Prostate gland (tissue), 2 donors: ENCODE measurements at regions of chr13 and their contacts with region 1.

Region 1: DNA sequence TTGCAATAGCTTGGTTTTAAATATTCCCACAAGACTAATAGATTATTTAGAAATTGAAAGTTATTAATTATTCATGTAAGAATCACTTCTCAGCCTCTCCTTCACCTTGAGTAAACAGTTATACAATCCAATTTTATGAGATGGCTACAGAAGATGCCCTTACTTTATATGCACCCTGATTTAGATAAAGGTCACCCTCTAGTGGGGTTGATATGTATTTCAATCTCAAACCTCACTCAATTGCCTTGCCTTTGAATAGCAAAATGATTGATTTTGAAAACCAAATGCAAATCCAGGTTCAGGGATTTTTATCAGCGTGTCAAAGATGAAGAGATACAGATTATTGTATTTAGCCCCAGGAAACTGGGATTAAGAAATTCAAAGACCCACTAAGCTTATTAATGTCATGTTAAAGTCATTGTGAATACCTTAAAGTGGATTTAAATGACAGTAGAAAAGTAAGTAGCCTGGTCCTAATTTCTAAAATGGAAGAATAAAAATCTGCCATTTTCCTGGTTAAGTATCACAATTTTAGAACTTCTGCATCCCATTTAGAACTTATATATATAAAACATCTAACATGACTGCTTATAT is 305.1 kb downstream of the ITGBL1 start:
- DNase-seq: no peak
- H3K4me3 ChIP-seq: no peak overlapping the region
- H3K27ac ChIP-seq: no peak overlapping the region
- H3K4me1 ChIP-seq: no peaks in the 10 kb centered on the region
- H3K27me3 ChIP-seq: no peaks in the 10 kb centered on the region
- CTCF ChIP-seq: peak in 3 of 4 experiments; percentile 16 to 53 (median 39)
- POLR2A ChIP-seq: no peak

Region 2: GRCh38 chr13:101144808-101145419 is 612.6 kb before region 1 on chr13:
- intact Hi-C with region 1: loop called (anchors 5 kb)
- DNase-seq: peak; percentile 14
- H3K4me3 ChIP-seq: no peak overlapping the region
- H3K27ac ChIP-seq: no peak overlapping the region
- H3K4me1 ChIP-seq: no peaks in the 10 kb centered on the region
- H3K27me3 ChIP-seq: no peaks in the 10 kb centered on the region
- CTCF ChIP-seq: peak; percentile 22 to 77 (median 61)
- POLR2A ChIP-seq: no peak

Region 3: DNA sequence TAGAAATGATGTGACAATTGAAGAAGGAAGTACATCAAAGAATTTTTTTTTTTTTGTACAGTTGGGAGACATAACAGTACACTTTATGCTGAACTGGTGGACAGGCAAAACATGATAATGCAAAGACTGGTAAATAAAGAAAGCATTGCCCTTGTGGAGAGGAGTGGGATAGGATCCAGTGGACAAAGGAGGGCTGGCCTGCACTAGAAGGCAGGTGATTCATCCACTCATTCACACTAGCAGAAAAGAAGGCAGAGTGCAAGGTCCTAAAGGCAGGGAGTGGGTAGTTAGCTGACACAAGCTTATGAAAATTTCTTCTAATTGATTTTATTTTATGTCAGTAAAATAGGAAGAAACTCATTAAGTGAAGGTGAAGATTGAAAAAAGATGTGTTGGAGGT is 323.6 kb before region 1 on chr13:
- intact Hi-C with region 1: no loop called
- DNase-seq: no peak
- H3K4me3 ChIP-seq: no peak overlapping the region
- H3K27ac ChIP-seq: no peak overlapping the region
- H3K4me1 ChIP-seq: no peaks in the 10 kb centered on the region
- H3K27me3 ChIP-seq: no peaks in the 10 kb centered on the region
- CTCF ChIP-seq: no peak
- POLR2A ChIP-seq: no peak

Region 4: DNA sequence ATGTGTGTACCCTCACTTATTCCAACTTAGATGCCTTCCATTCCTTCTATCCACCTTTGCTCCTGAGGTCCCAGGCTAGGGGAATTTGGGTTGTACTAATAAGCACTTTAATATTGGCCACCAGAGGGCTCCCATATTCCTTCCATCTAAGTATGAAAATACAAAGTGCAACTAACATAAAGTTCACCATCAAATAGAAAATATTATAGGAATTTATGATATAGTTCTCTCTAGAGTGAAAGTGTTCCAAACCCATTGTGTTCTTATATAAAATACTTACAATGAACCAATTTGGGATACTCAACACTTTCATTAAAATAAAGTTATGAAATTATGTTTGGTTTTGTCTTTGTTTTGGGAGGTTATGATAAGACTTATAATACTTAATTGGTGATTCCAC is 242.8 kb before region 1 on chr13:
- intact Hi-C with region 1: loop called (anchors 5 kb)
- DNase-seq: no peak
- H3K4me3 ChIP-seq: no peak overlapping the region
- H3K27ac ChIP-seq: no peak overlapping the region
- H3K4me1 ChIP-seq: no peaks in the 10 kb centered on the region
- H3K27me3 ChIP-seq: no peaks in the 10 kb centered on the region
- CTCF ChIP-seq: peak in 3 of 4 experiments; percentile 46 to 59 (median 53)
- POLR2A ChIP-seq: no peak